ENCODE measurements at regions of chr1 and their contacts with region 1.

Region 1: GRCh38 chr1:12604114-12604874 is 13.7 kb downstream of the DHRS3 start:
- DNase-seq: peak; percentile 80
- H3K4me3 Mint-ChIP-seq: peak overlapping the region; percentile 27
- H3K27ac Mint-ChIP-seq: peak overlapping the region; percentile 88
- H3K4me1 Mint-ChIP-seq: peaks cover 64% of the 10 kb centered on the region
- H3K27me3 Mint-ChIP-seq: peaks cover 12% of the 10 kb centered on the region

Region 2: DNA sequence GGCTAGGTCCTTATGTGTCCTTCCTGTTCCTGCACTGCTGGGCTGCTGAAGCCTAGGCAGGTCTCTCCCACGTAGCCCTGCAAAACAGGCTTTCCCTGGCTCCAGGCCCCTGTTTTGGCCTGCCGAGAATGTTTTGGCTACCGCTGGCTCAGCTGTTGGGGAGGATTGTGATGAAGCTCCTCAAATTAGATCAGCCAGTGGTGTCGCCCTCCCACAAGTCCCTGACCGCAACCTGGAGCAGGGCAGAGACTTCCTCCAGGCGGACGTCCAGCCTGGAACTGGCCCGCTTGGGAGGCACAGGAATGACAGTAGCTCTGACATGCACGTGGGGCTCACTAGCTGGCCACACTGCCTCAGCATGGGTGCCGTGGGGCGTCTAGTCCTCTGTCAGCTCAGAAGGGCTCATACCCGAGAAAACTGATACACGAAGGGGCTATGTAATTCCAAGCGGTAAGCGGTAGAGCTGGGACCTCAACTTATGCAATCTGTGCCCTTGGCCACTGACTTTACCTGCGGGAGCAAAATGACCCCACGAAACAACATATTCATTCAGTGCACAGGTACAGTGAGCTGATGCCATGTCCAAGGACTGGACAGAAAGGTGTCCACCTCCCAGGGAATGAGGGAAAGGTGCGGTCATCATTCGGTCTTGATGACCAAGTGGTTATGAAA is 12.9 kb before region 1 on chr1:
- CTCF ChIA-PET with region 1: interaction called, 12 read pairs
- DNase-seq: no peak
- H3K4me3 Mint-ChIP-seq: no peak overlapping the region
- H3K27ac Mint-ChIP-seq: no peak overlapping the region
- H3K4me1 Mint-ChIP-seq: peaks cover 19% of the 10 kb centered on the region
- H3K27me3 Mint-ChIP-seq: peaks cover 23% of the 10 kb centered on the region

Measured in activated naive CD4-positive, alpha-beta T cell treated with anti-CD3 and anti-CD28 coated beads, Interleukin-2, amount 10 ng/mL, durations not matched to agents 7 days and 5 days (primary cell).